HCT116 (cell line): ENCODE measurements at regions of chr6 and their contacts with region 1.

Region 1: DNA sequence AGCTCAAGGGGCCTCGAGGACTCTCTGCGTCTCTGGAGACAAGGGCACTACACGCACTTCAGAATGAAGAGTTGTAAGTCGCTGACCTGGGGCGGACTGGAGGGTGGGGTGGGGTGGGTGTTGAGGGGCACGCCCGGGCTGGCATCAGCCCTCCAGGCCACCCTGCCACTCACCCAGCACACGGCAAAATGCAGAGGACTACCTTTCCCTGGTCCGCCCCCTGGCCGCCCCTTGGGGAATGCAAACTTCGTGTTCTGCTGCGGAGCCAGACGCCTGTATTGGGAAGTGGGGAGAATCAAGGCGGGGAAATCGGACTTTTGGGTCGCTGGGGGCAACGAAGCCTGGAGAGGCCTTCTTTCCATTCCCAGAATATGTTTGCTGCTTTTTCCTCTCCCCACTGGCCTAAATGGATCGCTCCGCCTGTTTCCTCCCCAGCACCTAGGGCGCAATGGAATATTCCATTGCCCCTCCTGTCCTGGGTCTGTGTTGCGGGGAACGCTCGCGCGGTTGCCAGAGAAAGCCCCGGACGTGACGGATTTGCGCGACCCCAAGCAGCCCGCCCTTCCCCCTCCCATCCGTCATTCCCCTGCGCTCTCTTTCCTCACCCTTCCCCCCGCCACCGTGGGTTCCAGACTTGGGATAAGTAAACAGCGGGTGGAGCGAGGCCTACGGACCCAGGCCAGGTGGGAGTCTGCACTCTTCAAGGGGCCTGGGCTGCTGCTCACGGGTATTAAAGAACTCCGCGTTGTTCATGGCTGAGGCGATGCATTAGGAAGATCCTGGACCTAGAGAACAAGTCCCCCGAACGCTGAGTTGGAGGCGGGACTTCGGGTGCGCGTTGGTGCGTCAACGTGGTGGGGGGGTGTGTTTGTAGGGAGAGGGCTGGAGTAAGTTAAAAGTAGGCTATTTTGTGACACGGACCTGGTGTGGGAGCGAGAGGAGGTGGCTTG is at the start of gene PPT2:
- DNase-seq: peak; percentile 90
- ATAC-seq: peak; percentile 82
- H3K4me3 ChIP-seq: peak within 1 kb of the TSS; percentile 93 to 95
- H3K27ac ChIP-seq: peak within 1 kb of the TSS; percentile 98
- H3K4me1 ChIP-seq: peaks cover 12 to 25% of the 10 kb centered on the region in 2 experiments
- H3K27me3 ChIP-seq: no peaks in the 10 kb centered on the region
- CTCF ChIP-seq: peak in 1 of 3 experiments; percentile 32; a peak in 2 of 6 replicates
- POLR2A ChIP-seq: peak; percentile 18
- RAD21 ChIP-seq: no peak
- total RNA-seq, gene PPT2: 21.0 TPM

Region 2: DNA sequence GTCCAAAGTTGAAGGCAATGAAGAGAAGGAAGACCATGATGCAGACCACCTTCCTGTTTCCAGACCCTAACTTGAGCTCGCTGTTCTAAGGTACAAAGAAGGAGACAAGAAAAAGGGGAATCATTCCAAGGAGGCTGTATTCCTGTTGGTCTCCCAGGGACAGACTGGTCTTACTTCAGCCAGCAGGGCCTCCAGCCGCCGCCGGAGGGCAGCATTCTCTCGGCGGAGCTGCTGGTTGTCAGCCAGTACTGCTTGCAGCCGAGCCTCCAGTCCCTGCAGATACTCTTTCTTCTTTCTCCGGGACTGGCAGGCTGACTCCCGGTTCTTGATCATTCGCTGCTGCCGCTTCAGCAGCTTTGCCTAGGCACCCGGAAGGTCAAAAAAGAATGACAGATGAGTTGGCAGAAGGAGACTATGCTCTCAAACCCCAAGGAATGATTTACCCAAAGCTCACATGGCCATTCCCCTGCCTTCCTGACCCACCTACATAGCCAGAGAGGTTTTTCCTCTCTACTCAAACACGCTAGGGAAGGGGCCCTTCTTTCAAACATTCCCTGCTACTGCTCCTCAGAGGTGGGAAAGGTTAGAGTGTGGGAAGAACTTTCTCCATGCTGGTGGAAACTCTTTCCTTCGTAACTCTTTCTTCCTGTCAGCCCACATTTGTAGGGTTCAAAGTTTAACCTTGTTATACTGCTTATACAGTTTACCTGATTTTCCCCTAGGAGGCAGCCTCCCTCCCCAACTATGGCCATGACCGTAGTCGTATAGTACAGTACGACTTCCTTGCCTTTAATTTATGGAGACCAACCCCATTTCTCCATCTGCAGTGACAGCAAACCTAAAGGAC is 34.8 kb before region 1 on chr6:
- CTCF ChIA-PET with region 1: interaction called, 6 read pairs
- POLR2A ChIA-PET with region 1: no interaction called
- RAD21 ChIA-PET with region 1: no interaction called
- intact Hi-C with region 1: loop called (anchors 1 kb)
- DNase-seq: peak; percentile 59
- ATAC-seq: peak; percentile 94
- H3K4me3 ChIP-seq: no peak overlapping the region
- H3K27ac ChIP-seq: no peak overlapping the region; the same call in 1 of the 2 replicates
- H3K4me1 ChIP-seq: peaks cover 0 to 21% of the 10 kb centered on the region in 2 experiments; a peak in 2 of 4 replicates
- H3K27me3 ChIP-seq: no peaks in the 10 kb centered on the region
- CTCF ChIP-seq: peak; percentile 83 to 98 (median 92)
- POLR2A ChIP-seq: no peak
- RAD21 ChIP-seq: peak; percentile 94

Region 3: DNA sequence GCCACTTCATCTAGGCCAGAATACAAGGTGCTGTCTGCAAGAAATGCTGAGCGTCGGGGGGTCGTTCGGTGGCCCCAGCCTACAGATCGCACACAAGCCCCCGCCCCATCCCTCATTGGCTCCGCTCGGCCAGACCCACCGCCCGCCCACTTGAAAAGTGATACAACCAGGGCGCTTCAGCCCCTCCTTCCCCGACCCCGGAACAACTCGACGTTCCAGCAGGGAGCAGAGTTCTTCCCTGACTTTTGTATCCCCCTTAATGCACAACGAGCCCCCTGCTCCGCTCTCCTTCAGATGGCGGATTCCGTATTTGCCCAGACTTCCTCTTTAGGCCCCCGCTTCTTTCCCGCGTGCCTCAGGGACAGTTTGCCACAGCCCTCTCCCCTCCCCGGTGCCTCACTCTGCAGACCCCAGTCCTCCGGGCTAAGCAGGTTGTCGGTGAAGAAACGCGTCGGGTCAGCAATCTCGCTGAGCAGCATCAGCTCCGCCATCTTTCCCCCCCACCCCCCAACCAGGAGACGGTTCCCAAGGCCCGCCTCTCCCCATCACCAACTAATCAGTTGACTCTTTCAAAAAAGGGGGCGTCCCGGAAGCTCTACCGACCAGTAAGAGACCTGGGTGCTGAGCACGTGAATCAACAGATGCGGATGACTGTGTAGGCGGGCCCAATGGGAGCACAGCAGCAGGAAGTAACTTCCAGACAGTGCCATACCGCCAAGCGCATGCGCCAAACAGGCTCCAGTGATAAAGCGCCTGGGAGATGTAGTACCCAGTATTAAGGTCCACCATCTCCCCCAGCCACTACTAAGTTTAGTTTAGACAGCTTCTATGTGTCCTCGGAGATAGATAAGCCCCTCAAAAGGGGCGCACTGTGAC is 25.9 kb before region 1 on chr6 and contains the start of gene ATF6B:
- CTCF ChIA-PET with region 1: no interaction called
- POLR2A ChIA-PET with region 1: interaction called, 3 read pairs
- RAD21 ChIA-PET with region 1: no interaction called
- intact Hi-C with region 1: loop called (anchors 1 kb)
- DNase-seq: peak; percentile 98
- ATAC-seq: peak; percentile 89
- H3K4me3 ChIP-seq: peak within 1 kb of the TSS; percentile 94 to 100
- H3K27ac ChIP-seq: peak within 1 kb of the TSS; percentile 92
- H3K4me1 ChIP-seq: peaks cover 24 to 31% of the 10 kb centered on the region in 2 experiments
- H3K27me3 ChIP-seq: no peaks in the 10 kb centered on the region
- CTCF ChIP-seq: no peak
- POLR2A ChIP-seq: no peak
- RAD21 ChIP-seq: no peak
- total RNA-seq, gene ATF6B: 63.9 TPM

Region 4: DNA sequence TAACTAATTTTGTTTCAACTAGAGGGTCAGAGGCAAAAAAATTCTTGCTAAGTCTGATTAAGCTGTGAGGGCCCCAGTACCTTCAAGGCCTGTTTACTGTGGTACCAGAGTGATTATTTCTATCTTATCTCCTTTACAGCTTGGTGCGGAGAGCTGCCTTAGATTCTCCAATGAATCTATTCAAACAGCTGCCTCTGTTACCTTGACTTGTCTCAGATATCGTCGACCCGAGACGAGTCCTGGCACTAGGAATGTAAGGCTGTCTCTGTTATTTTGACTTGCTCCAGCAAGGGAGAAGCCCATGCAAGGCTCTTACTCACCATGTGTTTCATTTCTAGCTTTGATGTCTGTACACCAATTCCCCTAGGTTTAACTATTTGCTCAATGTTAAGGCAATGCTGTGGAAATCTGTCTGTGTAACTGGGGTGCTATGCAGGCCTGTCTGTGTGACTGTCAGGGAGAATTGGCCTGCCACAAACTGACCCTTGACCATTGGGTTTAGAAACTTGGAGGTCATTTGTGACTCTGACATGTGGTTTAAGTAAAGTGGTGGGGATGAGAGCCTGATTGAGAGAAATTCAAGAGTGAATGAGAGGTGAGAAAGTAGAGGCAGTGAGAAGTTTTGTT is 13.3 kb before region 1 on chr6:
- CTCF ChIA-PET with region 1: no interaction called
- POLR2A ChIA-PET with region 1: no interaction called
- RAD21 ChIA-PET with region 1: no interaction called
- intact Hi-C with region 1: no loop called
- DNase-seq: no peak
- ATAC-seq: no peak
- H3K4me3 ChIP-seq: no peak overlapping the region
- H3K27ac ChIP-seq: no peak overlapping the region
- H3K4me1 ChIP-seq: no peaks in the 10 kb centered on the region
- H3K27me3 ChIP-seq: no peaks in the 10 kb centered on the region
- CTCF ChIP-seq: no peak
- POLR2A ChIP-seq: no peak
- RAD21 ChIP-seq: no peak